Activated naive CD4-positive, alpha-beta T cell treated with anti-CD3 and anti-CD28 coated beads for 36 hours (primary cell): ENCODE measurements at regions of chr14 and their contacts with region 1.

Region 1: DNA sequence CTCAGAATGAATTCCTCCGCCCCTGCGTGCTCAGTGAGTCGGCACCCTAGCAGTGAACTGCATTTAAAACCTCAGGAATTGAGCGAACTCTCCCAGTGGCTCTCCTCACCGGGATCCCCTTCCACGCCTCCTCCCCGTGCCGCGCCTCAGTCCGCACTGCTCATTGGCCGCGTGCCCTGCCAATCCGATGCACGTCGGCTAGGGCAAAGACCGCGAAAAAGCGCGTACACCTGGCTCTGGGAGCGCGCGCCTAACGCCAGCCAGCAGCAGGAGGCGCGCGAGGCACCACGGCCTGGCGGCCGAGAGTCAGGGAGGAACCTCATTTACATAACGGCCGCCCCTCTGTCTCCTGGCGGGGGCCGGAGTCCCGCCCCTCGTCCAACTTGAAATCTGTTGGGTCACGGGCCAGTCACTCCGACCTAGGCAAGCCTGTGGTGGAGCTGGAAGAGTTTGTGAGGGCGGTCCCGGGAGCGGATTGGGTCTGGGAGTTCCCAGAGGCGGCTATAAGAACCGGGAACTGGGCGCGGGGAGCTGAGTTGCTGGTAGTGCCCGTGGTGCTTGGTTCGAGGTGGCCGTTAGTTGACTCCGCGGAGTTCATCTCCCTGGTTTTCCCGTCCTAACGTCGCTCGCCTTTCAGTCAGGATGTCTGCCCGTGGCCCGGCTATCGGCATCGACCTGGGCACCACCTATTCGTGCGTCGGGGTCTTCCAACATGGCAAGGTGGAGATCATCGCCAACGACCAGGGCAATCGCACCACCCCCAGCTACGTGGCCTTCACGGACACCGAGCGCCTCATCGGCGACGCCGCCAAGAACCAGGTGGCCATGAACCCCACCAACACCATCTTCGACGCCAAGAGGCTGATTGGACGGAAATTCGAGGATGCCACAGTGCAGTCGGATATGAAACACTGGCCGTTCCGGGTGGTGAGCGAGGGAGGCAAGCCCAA is at the start of gene HSPA2:
- DNase-seq: peak; percentile 97
- H3K4me3 Mint-ChIP-seq: peak within 1 kb of the TSS; percentile 92
- H3K27ac Mint-ChIP-seq: peak within 1 kb of the TSS; percentile 83
- H3K4me1 Mint-ChIP-seq: peaks cover 30% of the 10 kb centered on the region
- H3K27me3 Mint-ChIP-seq: peaks cover 22% of the 10 kb centered on the region
- total RNA-seq, gene HSPA2: 4.1 to 5.1 TPM

Region 2: DNA sequence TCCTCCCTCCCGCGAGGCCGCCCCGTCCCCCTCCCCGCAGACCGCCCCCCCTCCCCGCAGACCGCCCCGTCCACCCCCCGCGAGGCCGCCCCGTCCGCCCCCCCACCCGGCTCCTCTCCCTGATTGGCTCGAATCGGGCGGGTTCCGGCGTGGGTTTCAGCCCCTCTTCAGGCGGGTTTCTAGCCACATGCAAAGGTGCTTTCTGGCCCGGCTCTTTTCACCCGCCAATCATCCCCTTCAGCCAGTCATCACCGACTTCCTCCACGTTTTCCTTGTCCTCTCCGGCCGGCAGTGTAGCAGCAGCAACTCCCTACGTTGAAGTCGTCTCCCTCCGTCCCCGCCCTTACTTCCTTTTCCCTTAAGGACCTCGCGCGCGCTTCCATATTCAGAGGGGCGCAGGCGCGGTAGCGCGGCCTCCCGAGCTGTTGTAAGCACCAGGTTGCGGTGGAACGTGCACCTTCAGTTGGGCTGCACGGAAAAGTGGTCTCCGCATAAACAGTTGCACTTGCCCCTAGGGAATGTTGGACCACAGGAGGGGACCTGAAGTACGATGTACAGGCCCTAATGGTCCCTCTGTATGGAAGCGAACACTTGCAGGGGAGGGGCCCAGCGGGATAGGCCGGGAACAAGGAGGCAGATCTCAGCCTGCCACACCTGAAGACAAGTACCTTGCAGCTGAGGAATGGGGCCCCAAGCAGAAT is 201.7 kb before region 1 on chr14:
- CTCF ChIA-PET with region 1: no interaction called
- intact Hi-C with region 1: loop called (anchors 1 kb)
- DNase-seq: peak; percentile 95
- H3K4me3 Mint-ChIP-seq: peak overlapping the region; percentile 92
- H3K27ac Mint-ChIP-seq: peak overlapping the region; percentile 86
- H3K4me1 Mint-ChIP-seq: peaks cover 19% of the 10 kb centered on the region
- H3K27me3 Mint-ChIP-seq: no peaks in the 10 kb centered on the region

Region 3: DNA sequence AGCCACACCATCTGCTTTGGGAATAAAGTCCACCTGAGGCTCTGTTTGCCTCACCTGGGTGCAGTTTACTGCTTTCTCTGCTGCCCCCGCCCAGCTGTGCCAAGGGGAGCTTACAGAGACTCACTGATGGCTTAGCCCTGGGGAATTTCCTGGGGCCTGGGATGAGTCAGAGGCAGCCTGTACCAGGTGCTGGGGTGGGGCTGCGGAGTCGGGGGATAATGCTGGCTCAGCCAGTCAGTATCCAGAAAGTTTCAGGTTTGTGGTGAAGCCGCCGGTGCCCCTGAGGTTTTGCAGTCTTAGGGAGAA is 186.1 kb after region 1 on chr14:
- CTCF ChIA-PET with region 1: no interaction called
- intact Hi-C with region 1: no loop called
- DNase-seq: peak; percentile 46
- H3K4me3 Mint-ChIP-seq: no peak overlapping the region
- H3K27ac Mint-ChIP-seq: no peak overlapping the region
- H3K4me1 Mint-ChIP-seq: peaks cover 30% of the 10 kb centered on the region
- H3K27me3 Mint-ChIP-seq: no peaks in the 10 kb centered on the region